Mammary epithelial cell (primary cell): ENCODE measurements at regions of chr6 and their contacts with region 1.

Region 1: GRCh38 chr6:2866181-2866846 is 24.7 kb upstream of the SERPINB1 start:
- DNase-seq: peak; percentile 37
- H3K4me3 ChIP-seq: no peak overlapping the region
- H3K27ac ChIP-seq: no peak overlapping the region
- H3K4me1 ChIP-seq: peaks cover 7% of the 10 kb centered on the region
- H3K27me3 ChIP-seq: no peaks in the 10 kb centered on the region
- CTCF ChIP-seq: no peak

Region 2: DNA sequence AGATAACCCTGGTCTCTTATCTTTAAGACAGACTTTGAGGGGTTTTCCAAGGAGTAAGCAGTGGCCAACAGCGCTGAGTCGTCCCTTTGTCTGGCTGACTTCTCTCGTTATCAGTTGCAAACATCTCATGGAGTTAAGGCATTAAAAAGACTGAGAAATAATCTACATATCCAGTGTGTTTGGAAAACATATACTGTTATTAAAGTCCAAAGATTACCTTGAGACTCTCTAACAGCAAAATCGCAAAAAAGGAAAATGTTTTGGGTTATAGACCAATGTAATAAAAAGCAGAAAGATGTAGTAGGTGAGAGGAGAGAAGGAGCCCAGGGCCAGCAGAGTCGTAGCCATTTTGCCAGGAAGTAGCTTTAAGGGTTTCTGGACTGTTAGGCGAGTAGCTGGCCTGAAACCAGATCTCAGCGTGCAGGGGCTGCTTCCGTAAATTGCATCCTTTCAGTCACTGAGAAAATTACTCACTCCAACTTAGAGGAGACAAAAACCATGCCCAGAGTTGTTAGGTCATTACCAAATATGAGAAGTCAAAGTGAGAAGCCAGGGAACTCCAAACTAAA is 140.2 kb before region 1 on chr6:
- CTCF ChIA-PET with region 1: no interaction called
- dilution Hi-C with region 1: no loop called
- in situ Hi-C with region 1: no loop called
- intact Hi-C with region 1: no loop called
- DNase-seq: no peak
- H3K4me3 ChIP-seq: no peak overlapping the region
- H3K27ac ChIP-seq: no peak overlapping the region
- H3K4me1 ChIP-seq: no peaks in the 10 kb centered on the region
- H3K27me3 ChIP-seq: no peaks in the 10 kb centered on the region
- CTCF ChIP-seq: no peak

Region 3: DNA sequence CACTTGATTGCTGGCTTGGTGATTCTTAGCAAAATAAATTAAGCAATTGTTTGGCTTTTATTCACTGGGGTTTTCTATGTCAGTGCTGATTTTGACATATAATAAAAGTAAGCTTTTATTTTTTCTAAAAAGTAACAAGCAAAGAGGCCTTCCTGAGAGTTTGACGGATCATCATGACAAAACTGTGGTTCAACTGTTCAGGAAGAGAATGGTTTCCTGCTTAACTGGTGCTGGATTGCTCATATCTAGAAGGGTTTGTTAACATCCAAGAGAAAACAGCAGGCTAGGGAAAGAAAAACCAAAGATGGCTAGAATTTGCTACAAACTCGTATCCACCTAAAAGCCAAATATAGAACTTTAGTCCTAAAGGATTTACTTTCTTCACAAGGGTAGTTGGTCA is 45.9 kb before region 1 on chr6:
- CTCF ChIA-PET with region 1: no interaction called
- dilution Hi-C with region 1: no loop called
- in situ Hi-C with region 1: no loop called
- intact Hi-C with region 1: no loop called
- DNase-seq: no peak
- H3K4me3 ChIP-seq: no peak overlapping the region
- H3K27ac ChIP-seq: no peak overlapping the region
- H3K4me1 ChIP-seq: peaks cover 29% of the 10 kb centered on the region
- H3K27me3 ChIP-seq: no peaks in the 10 kb centered on the region
- CTCF ChIP-seq: no peak

Region 4: DNA sequence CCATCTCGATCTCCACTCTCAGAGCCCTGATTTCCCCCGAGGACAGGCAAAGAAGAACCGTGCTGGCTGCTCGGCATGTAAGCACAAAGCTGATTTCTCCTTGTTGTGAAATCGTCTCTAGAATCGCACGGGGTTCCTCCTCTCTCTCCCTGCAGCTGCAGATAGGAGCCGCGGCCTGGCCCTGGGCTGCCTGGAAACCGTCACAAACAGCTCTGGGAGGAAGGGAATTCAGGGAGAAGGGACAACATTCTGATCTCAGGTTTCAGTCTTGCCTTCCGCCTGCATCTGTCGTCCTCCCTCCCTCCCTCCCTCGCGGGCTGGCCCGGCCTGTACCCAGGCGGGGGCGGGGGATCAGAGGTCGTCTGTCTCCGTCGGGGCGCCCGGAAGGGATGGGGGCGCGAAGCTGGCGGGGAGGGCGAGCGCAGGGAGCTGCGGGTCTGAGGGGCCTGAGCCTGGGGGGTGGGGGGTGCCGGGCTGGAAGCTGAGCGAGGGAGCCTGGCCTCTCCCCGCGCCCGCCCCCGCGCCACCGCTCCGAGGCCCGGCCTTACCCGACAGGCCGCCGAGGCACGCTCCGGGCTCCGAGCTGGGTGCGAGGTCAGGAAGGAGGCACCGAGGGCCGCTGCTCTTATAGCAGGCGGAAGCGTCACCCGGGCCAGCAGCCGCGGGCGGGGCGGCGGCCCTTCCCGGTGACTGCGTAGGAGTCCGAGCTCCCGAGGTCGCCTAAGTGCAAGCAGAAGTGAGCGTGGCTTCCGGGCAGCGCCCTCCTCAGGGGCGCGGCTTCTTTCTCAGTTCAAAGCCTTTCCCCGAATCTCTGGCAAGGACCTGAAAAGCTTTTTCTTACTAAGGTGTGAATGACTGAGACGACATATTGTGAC is 24.8 kb before region 1 on chr6 and contains the start of gene SERPINB1:
- CTCF ChIA-PET with region 1: no interaction called
- dilution Hi-C with region 1: no loop called
- in situ Hi-C with region 1: no loop called
- intact Hi-C with region 1: no loop called
- DNase-seq: peak; percentile 86
- H3K4me3 ChIP-seq: peak within 1 kb of the TSS; percentile 47 to 59 (median 55)
- H3K27ac ChIP-seq: peak within 1 kb of the TSS; percentile 91
- H3K4me1 ChIP-seq: peaks cover 46% of the 10 kb centered on the region
- H3K27me3 ChIP-seq: no peaks in the 10 kb centered on the region
- CTCF ChIP-seq: no peak
- total RNA-seq, gene SERPINB1: 17.0 to 40.0 TPM

Region 5: DNA sequence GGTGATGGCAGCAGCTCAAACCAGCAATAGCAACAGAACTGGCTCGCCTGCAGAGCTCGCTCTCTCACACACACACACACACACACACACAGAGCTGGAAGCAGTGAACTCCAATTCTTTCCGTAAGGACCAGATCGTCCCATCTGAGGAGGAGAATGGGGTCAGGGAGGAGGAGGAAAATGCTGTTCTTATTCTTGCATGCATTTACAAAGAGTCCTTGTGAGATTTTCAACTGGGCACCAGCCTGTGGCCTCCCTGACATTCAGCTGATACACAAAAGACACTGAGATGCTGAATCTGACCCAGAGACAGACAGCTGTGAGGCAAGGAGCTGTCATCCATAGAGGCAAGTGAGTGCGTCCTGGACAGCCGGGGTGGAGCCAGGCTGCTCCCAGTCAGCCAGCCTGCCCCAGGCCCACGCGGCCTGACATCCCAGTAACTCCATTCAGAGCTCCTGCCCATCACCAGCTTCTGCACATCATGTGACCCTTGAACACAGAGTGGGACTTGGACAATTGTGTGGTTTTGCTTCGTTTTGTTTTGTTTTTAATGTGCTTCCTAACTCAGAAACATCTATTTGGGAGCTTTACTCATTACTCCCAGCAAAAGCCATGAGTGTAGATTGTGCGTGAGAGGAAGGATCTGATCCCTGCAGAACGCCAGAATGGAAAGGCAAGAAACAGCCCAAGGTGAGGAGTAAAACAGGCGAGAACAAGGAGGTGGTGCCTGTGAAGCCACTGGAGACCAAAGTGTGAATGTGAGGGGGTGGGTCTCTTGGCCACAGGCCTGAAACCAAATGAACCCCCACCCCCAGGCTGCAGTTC is 34.7 kb after region 1 on chr6:
- CTCF ChIA-PET with region 1: no interaction called
- dilution Hi-C with region 1: loop called (anchors 5 kb)
- in situ Hi-C with region 1: no loop called
- intact Hi-C with region 1: no loop called
- DNase-seq: no peak
- H3K4me3 ChIP-seq: no peak overlapping the region
- H3K27ac ChIP-seq: no peak overlapping the region
- H3K4me1 ChIP-seq: peaks cover 6% of the 10 kb centered on the region
- H3K27me3 ChIP-seq: peaks cover 4% of the 10 kb centered on the region
- CTCF ChIP-seq: no peak

Region 6: GRCh38 chr6:2940010-2940850 is 73.9 kb after region 1 on chr6:
- CTCF ChIA-PET with region 1: no interaction called
- dilution Hi-C with region 1: loop called (anchors 5 kb)
- in situ Hi-C with region 1: no loop called
- intact Hi-C with region 1: no loop called
- DNase-seq: no peak
- H3K4me3 ChIP-seq: no peak overlapping the region
- H3K27ac ChIP-seq: no peak overlapping the region
- H3K4me1 ChIP-seq: no peaks in the 10 kb centered on the region
- H3K27me3 ChIP-seq: peaks cover under 1% of the 10 kb centered on the region
- CTCF ChIP-seq: no peak